SK-N-SH (cell line): ENCODE measurements at regions of chr15 and their contacts with region 1.

Region 1: DNA sequence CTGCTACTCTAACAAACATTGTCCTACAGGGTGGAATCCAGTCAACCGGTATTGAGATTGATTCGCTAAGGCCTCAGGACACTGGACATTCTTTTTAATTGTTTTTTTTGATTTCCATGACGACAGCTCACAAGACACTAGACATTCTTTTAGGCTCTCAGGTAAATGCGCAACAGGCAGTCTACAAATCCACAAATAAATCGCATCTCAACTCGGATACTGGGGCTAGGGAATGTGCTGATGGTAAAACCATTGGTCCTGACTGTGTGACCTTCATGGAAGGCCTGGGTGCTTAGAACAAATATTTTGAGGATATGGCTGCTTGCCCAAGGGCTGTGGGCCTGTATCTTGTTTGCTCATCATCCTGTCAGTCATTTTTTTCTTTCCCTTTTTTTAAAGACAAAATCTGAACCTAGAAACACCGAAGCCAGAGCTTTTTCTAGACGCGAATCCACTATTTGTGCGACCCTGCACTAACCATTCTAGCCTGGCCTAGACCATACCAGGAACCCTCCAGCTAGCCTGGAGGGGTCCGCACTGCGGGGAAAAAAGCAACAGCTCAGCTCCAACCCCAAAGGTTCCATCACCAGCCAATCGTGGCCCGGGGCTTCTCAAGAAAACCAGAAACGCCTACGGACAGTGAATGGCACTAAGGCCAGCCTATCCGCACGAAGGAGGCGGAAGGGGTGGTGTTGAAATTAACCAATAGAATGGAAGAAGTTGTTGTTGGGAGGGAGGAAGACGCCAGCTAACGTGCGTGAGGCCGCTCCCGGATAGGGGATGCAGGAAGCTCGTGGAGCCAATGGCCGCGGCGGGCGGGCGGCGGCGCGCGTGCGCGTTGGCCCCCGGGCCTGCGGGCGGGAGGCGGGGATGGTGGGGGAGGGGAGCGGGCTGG is 18.1 kb upstream of the CHD2 start:
- DNase-seq: peak; percentile 98
- H3K4me3 ChIP-seq: peak overlapping the region; percentile 45 to 61
- H3K27ac ChIP-seq: peak overlapping the region; percentile 78 to 88
- H3K4me1 ChIP-seq: peaks cover 16 to 19% of the 10 kb centered on the region in 2 experiments; a peak in 3 of 4 replicates
- H3K27me3 ChIP-seq: no peaks in the 10 kb centered on the region
- CTCF ChIP-seq: no peak
- EP300 ChIP-seq: no peak; a peak in 1 of 4 replicates
- RAD21 ChIP-seq: no peak; the same call in 1 of the 2 replicates

Region 2: DNA sequence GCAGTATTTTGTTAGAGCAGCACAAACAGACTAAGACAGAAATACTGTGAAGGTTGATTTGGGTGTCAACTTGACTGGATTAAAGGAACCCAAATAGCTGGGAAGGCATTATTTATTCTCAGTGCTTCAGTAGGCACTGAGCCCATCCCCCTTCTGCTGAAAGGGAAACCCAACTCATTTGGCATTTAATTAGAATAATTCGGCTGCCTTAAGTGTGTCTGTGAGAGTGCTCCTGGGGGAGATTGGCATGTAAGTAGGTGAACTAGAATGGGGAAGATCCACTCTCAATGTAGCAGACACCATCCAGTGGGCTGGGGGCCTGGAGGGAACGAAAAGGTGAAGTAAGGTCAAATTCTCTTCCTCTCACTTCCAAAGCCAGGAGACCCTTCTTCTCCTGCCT is 1049.0 kb before region 1 on chr15:
- CTCF ChIA-PET with region 1: no interaction called
- POLR2A ChIA-PET with region 1: no interaction called
- DNase-seq: no peak
- H3K4me3 ChIP-seq: no peak overlapping the region
- H3K27ac ChIP-seq: no peak overlapping the region
- H3K4me1 ChIP-seq: no peaks in the 10 kb centered on the region
- H3K27me3 ChIP-seq: no peaks in the 10 kb centered on the region
- CTCF ChIP-seq: no peak
- EP300 ChIP-seq: no peak
- RAD21 ChIP-seq: no peak

Region 3: DNA sequence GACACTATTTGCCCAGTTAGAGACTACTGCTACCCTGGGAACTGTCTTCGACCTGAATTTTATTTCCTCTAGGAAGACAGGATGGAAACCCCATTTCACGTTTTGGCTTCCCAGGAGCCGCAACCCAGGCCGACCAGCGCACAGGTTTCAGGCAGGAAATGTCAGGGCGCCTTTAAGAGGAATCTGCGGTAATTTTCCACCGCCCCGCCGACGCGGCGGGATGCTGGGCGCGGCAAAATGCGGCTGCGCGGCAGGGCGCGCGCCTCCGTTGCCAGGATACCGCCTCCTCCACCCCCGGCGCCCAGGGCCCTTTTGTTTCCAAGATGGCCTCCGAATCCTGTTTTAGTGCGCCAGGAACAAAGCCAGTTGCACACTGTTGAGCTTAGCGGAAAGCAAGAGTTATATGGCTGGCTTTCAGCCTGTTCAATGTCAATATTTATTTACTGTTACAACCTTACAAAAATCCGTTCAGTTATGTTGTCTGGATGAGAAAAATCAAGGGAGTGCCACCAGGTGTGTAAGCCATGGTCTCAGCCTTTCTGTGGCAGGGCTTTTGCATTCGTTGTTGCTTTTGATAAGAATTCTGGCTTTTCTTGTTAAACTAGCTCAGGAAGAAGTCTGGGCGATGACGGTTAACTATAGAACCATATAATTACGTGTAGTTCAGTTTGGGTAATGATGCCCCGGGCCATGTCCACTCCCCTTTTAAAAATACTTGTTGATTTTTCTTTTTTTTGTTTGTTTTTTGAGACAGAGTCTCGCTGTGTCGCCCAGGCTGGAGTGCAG is 61.6 kb before region 1 on chr15:
- CTCF ChIA-PET with region 1: interaction called, 3 read pairs
- POLR2A ChIA-PET with region 1: interaction called, 26 read pairs
- DNase-seq: peak; percentile 96
- H3K4me3 ChIP-seq: peak overlapping the region; percentile 38 to 58
- H3K27ac ChIP-seq: peak overlapping the region; percentile 78 to 98
- H3K4me1 ChIP-seq: peaks cover 21 to 40% of the 10 kb centered on the region in 2 experiments
- H3K27me3 ChIP-seq: no peaks in the 10 kb centered on the region
- CTCF ChIP-seq: no peak
- EP300 ChIP-seq: peak; percentile 32 to 35; a peak in 2 of 4 replicates
- RAD21 ChIP-seq: peak; percentile 24

Region 4: DNA sequence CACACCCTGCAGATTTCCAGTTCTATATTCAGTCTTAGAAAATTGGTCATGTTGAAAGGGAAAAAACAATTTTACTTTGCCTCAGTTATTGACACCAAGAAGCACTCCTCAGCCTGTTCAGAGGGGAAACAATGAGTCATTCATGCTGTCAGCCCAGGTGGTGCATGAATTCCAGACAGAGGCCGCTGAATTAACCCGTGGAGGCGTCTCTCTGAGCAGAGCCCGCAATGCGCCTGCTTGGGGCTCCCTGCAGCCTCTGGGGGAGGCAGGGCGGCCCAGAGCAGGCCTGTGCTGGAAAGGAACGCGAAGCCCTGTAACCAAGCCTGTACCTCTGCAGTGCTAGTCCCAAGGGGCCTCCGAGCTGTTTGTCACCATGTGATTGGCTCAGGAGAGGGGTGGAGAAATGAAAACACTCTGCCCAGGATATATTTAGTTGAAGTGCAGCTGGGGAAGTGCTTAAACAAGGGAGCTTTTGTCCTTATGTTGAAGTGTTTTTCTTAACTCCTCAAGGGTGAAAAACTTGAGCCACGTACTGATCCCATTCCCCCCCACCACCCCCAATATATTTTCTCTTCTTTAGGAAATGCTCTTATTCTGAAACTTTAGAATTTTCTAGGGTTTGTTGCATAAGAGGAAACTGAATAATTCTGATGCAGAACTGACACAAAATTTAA is 50.3 kb before region 1 on chr15:
- CTCF ChIA-PET with region 1: interaction called, 9 read pairs
- POLR2A ChIA-PET with region 1: interaction called, 50 read pairs
- DNase-seq: peak; percentile 85
- H3K4me3 ChIP-seq: peak overlapping the region; percentile 7 to 40; a peak in 2 of 4 replicates
- H3K27ac ChIP-seq: peak overlapping the region; percentile 88 to 94
- H3K4me1 ChIP-seq: peaks cover 16 to 26% of the 10 kb centered on the region in 2 experiments
- H3K27me3 ChIP-seq: no peaks in the 10 kb centered on the region
- CTCF ChIP-seq: no peak
- EP300 ChIP-seq: peak in 1 of 2 experiments; percentile 66; a peak in 2 of 4 replicates
- RAD21 ChIP-seq: peak; percentile 33; the same call in 1 of the 2 replicates

Region 5: DNA sequence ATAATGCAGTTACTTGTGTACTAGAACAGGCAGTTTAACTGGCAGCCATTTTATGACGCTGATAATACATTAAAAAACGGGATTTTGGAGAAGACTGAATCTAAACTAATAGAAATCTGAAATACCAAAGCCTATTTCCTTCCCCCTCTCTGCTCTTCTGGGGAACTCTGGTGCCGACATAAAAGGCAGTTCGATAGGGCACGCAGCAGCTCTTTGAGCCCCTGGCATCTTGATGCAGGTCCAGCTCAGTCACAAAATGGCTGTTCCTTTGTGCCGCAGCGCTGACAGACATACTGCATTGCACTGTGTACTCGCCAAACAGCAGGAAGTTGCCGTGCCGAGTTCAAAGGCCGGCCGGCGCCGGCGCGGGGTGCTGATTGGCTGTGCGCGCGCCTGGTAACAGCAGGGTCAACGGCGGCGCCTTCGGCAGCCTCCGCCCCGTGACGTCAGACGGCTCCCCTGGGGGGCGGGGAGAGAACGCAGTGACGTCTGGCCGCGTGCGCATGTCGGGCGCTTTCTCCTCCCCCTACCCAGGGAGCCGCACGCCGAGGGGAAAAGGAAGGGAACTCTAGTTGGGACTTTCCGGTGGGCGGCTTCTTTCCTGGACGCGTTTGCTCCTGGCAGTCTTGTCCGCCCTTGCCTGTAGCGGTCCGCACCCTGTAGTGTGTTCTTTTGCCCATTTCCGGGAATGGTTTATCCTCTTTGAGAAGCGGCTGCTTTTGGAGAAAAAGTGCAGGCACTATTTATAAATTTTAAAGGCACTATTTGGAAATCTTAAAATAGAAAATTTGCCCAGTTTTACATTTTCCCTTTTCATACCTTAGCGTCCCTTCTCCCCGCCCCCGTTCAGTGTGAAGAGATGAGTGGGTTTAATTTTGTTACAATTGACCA is 22.1 kb after region 1 on chr15:
- CTCF ChIA-PET with region 1: interaction called, 10 read pairs
- POLR2A ChIA-PET with region 1: interaction called, 43 read pairs
- DNase-seq: peak; percentile 94
- H3K4me3 ChIP-seq: peak overlapping the region; percentile 77 to 86
- H3K27ac ChIP-seq: peak overlapping the region; percentile 99 to 100
- H3K4me1 ChIP-seq: peaks cover 25 to 32% of the 10 kb centered on the region in 2 experiments
- H3K27me3 ChIP-seq: no peaks in the 10 kb centered on the region
- CTCF ChIP-seq: no peak
- EP300 ChIP-seq: peak in 1 of 2 experiments; percentile 73; a peak in 2 of 4 replicates
- RAD21 ChIP-seq: no peak